BJ (cell line): ENCODE measurements at regions of chr2 and their contacts with region 1.

Region 1: GRCh38 chr2:121736462-121737341 is at the start of gene NIFK:
- DNase-seq: peak; percentile 82
- H3K4me3 ChIP-seq: peak within 1 kb of the TSS; percentile 87
- H3K27me3 ChIP-seq: no peaks in the 10 kb centered on the region; the same call in 1 of the 2 replicates
- CTCF ChIP-seq: no peak
- polyA plus RNA-seq, gene NIFK: 12.4 and 29.1 TPM in 2 replicates

Region 2: GRCh38 chr2:121530212-121530705 is 206.4 kb before region 1 on chr2:
- CTCF ChIA-PET with region 1: interaction called, 3 read pairs
- POLR2A ChIA-PET with region 1: interaction called, 11 read pairs
- DNase-seq: peak; percentile 11
- H3K4me3 ChIP-seq: peak overlapping the region; percentile 83
- H3K27me3 ChIP-seq: no peaks in the 10 kb centered on the region
- CTCF ChIP-seq: no peak

Region 3: DNA sequence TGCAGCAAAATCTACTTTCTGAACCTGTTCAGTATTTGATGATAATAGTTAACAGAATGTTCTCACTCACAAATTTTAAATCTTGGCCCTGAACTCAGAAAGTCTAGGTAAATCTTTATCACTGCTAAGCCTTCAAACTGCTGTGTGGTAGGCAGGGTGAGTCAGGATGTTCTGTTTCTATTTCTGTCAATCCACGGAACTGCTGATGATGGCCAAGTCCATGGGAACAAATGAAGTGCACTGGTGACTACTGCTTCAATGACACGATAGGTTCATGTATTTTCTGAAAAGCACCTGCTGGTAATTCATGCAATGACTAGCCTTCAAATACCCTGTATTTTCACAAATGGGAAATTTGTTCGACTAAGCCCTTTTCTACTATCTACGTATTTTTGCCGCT is 14.2 kb before region 1 on chr2:
- CTCF ChIA-PET with region 1: interaction called, 3 read pairs
- POLR2A ChIA-PET with region 1: interaction called, 29 read pairs
- DNase-seq: peak; percentile 47
- H3K4me3 ChIP-seq: no peak overlapping the region
- H3K27me3 ChIP-seq: no peaks in the 10 kb centered on the region
- CTCF ChIP-seq: no peak

Region 4: DNA sequence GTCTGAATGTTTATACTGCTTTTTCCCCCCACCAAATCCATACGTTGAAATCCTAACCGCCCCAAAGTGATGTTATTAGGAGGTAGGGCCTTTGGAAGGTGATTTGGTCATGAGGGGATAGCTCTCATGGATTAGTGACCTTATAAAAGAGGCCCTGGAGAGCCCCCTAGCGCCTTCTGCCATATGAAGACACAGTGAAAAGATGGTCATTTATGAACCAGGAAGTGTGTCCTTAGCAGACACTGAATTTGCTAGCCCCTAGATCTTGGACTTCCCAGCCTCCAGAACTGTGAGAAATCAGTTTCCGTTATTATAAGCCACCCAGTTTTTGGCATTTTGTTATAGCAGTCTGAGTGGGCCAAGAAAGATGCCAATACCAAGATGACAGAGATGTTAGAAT is 11.5 kb after region 1 on chr2:
- CTCF ChIA-PET with region 1: interaction called, 4 read pairs
- POLR2A ChIA-PET with region 1: interaction called, 17 read pairs
- DNase-seq: no peak
- H3K4me3 ChIP-seq: no peak overlapping the region
- H3K27me3 ChIP-seq: no peaks in the 10 kb centered on the region
- CTCF ChIP-seq: peak; percentile 60